Activated naive CD4-positive, alpha-beta T cell treated with anti-CD3 and anti-CD28 coated beads, Interleukin-2, amount 10 ng/mL, durations not matched to agents 7 days and 5 days (primary cell): ENCODE measurements at regions of chr17 and their contacts with region 1.

Region 1: GRCh38 chr17:19362277-19363113 is at the start of gene B9D1:
- DNase-seq: peak; percentile 94
- H3K4me3 Mint-ChIP-seq: peak within 1 kb of the TSS; percentile 82
- H3K27ac Mint-ChIP-seq: peak within 1 kb of the TSS; percentile 78
- H3K4me1 Mint-ChIP-seq: peaks cover 26% of the 10 kb centered on the region
- H3K27me3 Mint-ChIP-seq: peaks cover 74% of the 10 kb centered on the region

Region 2: GRCh38 chr17:19343671-19344151 is 18.8 kb before region 1 on chr17:
- CTCF ChIA-PET with region 1: no interaction called
- DNase-seq: no peak
- H3K4me3 Mint-ChIP-seq: no peak overlapping the region
- H3K27ac Mint-ChIP-seq: no peak overlapping the region
- H3K4me1 Mint-ChIP-seq: no peaks in the 10 kb centered on the region
- H3K27me3 Mint-ChIP-seq: peaks cover 44% of the 10 kb centered on the region

Region 3: DNA sequence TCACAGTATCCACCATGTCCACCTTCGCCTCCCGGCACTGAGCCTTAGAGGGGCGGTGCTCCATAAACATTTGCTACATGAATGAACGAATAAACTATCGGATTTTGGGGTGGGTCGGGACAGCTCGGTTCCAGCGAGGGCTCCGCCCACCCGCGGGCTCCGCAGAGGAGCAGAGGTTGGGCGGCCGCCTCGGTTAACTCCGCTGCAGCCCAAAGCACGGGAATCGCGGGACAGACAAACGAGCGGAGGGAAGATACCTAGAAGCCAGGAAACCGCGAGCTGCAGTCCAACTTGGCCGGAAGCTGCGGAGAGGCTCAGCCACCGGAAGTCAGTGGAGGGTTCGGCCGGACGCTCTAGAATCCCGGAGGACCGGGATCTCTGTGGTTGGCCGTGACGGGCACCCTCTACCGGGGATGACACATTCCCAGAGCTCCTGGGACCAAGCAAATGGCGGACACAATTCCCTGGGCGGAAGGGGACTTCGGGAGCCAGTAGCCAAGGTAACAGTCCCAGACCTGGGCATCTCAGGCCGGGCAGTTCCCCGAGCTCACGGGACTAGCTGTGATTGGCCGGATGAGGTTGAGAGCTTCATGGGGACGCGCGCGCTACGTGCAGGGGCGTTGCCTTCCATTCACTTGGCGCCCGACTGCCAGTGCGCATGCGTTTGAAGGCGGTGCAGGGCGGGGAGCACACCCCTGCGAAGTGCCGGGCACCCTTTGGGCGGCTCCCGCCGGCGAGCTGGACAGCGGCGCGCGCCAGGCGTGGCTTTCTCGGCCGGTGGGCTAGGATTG is 15.3 kb after region 1 on chr17:
- CTCF ChIA-PET with region 1: interaction called, 18 read pairs
- DNase-seq: peak; percentile 98
- H3K4me3 Mint-ChIP-seq: peak overlapping the region; percentile 96
- H3K27ac Mint-ChIP-seq: peak overlapping the region; percentile 97
- H3K4me1 Mint-ChIP-seq: peaks cover 51% of the 10 kb centered on the region
- H3K27me3 Mint-ChIP-seq: no peaks in the 10 kb centered on the region

Region 4: DNA sequence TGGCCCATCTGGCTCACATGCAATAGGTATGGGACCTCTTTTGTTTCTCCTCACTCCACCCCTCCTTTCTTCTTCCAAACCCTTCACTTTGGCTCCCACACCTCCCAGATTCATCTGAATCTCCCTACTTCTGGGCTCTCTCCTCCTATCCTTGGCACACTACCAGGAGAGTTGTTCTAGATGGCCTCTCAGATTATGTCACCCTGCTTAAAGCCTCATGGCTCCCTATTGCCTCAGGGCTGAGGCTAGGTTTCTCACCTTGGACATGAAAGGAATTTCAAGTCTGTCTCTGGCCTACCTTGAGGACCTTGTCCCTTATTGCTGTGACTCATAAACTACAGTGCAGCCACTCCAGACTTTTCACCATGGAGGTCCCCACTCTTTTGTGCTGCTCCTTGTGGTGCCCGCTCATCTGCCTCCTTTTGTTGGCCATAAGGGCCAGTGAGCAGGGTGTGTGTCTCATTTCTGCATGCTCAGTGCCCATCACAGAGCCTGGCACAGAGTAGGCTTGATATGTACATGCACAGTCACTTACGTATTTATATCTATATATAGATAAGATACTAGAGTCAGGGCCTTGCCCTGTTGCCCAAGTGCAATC is 25.5 kb after region 1 on chr17:
- CTCF ChIA-PET with region 1: no interaction called
- DNase-seq: no peak
- H3K4me3 Mint-ChIP-seq: no peak overlapping the region
- H3K27ac Mint-ChIP-seq: peak overlapping the region; percentile 50
- H3K4me1 Mint-ChIP-seq: peaks cover 8% of the 10 kb centered on the region
- H3K27me3 Mint-ChIP-seq: peaks cover 52% of the 10 kb centered on the region

Region 5: GRCh38 chr17:19447085-19447583 is 84.6 kb after region 1 on chr17:
- CTCF ChIA-PET with region 1: interaction called, 102 read pairs
- DNase-seq: peak; percentile 80
- H3K4me3 Mint-ChIP-seq: no peak overlapping the region
- H3K27ac Mint-ChIP-seq: no peak overlapping the region
- H3K4me1 Mint-ChIP-seq: peaks cover 2% of the 10 kb centered on the region
- H3K27me3 Mint-ChIP-seq: peaks cover 51% of the 10 kb centered on the region

Region 6: DNA sequence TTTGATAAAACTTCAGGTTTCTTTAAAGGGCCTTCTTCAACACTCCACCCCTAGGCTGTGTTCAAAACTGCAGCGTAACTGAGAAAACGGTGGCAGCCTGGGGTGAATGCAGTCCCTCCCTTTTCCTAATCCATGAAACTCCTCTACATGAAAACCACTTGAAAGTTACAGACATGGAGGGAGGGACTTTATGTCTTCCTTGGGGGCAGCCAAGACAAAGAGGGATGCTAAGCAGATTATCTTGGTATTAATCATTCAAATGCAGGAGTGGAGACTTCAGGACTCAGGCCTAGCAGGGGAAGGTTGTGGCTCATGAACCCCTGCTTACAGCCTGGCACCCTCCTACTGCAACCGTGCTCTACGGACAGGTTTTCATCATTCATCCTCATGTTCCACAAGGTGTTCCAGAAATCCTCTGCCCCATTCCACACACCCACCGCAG is 95.4 kb after region 1 on chr17:
- CTCF ChIA-PET with region 1: interaction called, 10 read pairs
- DNase-seq: no peak
- H3K4me3 Mint-ChIP-seq: no peak overlapping the region
- H3K27ac Mint-ChIP-seq: no peak overlapping the region
- H3K4me1 Mint-ChIP-seq: peaks cover 12% of the 10 kb centered on the region
- H3K27me3 Mint-ChIP-seq: peaks cover 32% of the 10 kb centered on the region